ENCODE measurements at regions of chr4 and their contacts with region 1.

Region 1: DNA sequence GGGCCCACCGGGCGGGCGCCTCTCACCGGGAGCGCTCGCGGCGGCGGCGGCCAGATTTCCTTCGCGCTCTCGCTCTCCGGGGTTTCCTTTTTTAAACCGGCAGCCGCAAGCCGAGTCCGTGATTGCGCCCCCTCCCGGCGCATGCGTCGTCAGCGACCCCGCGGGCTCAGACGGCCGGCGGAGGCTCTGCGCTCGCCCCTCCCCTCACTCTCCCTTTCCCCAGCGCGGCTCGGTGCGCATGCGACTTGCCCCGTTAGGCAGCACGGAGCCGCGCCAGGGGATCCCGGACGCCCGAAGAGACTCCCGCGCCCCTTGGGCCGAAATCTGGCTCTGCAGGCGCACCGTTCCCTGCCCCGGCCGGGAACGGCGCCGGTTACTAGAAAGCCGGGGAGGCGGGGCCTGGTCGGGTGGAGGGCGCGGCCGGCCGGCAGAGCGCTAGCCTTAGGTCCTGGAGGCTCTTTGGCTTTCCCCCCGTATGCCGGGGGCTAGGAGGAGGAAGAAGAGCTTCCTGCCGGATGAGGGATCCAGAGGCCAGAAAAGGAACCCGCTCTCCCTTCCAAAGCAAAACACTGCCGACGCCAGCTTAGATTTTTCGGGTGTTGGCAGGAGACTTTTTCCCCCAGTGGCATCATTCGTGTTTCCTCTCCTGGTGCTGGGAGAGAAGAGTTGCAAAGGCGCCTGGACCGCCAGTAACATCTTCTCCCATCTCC is at the start of gene CLOCK:
- DNase-seq: peak; percentile 92 to 96
- ATAC-seq: peak; percentile 93
- H3K4me3 ChIP-seq: peak within 1 kb of the TSS; percentile 94 to 99
- H3K27ac ChIP-seq: peak within 1 kb of the TSS; percentile 65 to 71
- H3K4me1 ChIP-seq: no peaks in the 10 kb centered on the region
- H3K27me3 ChIP-seq: no peaks in the 10 kb centered on the region
- total RNA-seq, gene CLOCK: 32.4 to 36.8 TPM

Region 2: DNA sequence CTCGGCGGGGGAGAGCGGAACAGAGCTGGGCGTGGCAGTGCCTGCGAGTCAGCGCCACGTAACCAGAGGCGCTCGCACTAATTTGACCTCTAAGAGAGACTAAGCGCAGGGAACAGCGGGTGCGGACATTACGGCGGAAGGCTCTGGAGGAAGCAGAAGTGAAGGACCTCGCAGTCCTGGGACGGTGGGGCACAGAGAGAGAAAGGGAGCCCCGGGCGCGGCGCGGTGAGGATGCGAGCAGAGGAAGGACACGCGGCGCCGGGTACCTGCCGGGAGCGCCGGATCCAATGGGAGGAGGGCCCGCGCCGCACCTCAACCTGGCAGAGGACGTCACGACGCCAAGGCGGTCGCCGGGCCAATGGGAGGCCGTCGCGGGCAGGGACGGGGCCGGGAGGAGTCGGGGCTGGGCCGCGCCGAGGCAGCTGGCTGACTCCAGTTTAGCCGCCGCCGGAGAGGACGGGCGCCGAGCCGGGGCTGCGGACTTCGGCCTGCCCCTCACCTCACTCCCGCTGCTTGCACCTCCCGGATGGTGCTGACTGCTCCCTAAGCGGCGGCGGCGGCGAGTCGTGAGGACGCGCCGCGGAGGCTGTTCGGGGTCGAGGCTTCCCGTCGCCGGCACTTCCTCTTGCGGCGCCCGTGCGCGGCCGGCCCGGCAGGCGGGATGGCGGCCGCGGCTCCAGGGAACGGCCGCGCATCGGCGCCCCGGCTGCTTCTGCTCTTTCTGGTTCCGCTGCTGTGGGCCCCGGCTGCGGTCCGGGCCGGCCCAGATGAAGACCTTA is 151.2 kb before region 1 on chr4 and contains the start of gene TMEM165:
- intact Hi-C with region 1: loop called in 1 of 2 experiments (anchors 5 kb)
- DNase-seq: peak; percentile 95 to 97
- ATAC-seq: peak; percentile 96
- H3K4me3 ChIP-seq: peak within 1 kb of the TSS; percentile 97 to 99
- H3K27ac ChIP-seq: peak within 1 kb of the TSS; percentile 95 to 98
- H3K4me1 ChIP-seq: no peaks in the 10 kb centered on the region
- H3K27me3 ChIP-seq: no peaks in the 10 kb centered on the region
- total RNA-seq, gene TMEM165: 183 to 204 TPM

Region 3: GRCh38 chr4:55444827-55445226 is 102.1 kb before region 1 on chr4:
- intact Hi-C with region 1: loop called (anchors 10 kb)
- DNase-seq: no peak
- ATAC-seq: no peak
- H3K4me3 ChIP-seq: no peak overlapping the region
- H3K27ac ChIP-seq: no peak overlapping the region
- H3K4me1 ChIP-seq: no peaks in the 10 kb centered on the region
- H3K27me3 ChIP-seq: no peaks in the 10 kb centered on the region

Region 4: GRCh38 chr4:55458164-55458563 is 88.7 kb before region 1 on chr4:
- intact Hi-C with region 1: loop called in 1 of 2 experiments (anchors 10 kb)
- DNase-seq: no peak
- ATAC-seq: no peak
- H3K4me3 ChIP-seq: no peak overlapping the region
- H3K27ac ChIP-seq: no peak overlapping the region
- H3K4me1 ChIP-seq: no peaks in the 10 kb centered on the region
- H3K27me3 ChIP-seq: no peaks in the 10 kb centered on the region

Region 5: DNA sequence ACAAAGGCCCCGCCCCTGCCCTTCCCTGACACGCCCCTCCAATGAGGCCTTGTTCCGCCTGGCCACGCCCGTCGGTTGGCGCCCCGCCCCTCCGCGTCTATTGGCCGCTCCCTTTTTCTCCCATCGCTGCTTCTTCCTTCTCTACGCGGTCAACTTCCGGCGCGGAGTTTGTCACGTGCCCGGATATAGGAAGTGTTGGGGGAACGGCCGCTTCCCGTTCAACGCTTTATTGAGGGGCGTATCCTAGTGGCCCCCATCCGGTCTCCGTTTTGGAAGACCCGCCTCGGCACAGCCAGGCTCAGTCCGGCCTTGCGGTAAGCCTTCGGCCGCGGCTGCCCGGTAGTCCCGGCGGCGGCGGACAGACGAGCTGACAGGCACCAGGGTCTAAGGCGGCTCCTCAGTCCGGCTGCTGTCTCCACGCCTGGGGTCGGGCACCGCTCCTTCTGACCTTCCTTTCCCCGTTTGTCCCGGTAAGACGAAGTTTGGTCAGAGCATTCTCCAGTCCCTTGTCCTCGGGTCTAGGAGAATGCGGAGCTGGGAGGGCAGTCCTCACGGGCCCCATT is 306.7 kb after region 1 on chr4 and contains the start of gene EXOC1:
- intact Hi-C with region 1: loop called (anchors 10 kb)
- DNase-seq: peak; percentile 99 to 100
- ATAC-seq: peak; percentile 99
- H3K4me3 ChIP-seq: peak within 1 kb of the TSS; percentile 78 to 94
- H3K27ac ChIP-seq: peak within 1 kb of the TSS; percentile 3 to 89
- H3K4me1 ChIP-seq: peaks cover 2 to 4% of the 10 kb centered on the region in 2 donors
- H3K27me3 ChIP-seq: no peaks in the 10 kb centered on the region
- total RNA-seq, gene EXOC1: 40.1 to 50.4 TPM

Measured in aorta (tissue), 5 donors.